ENCODE measurements at regions of chr10 and their contacts with region 1.

Region 1: DNA sequence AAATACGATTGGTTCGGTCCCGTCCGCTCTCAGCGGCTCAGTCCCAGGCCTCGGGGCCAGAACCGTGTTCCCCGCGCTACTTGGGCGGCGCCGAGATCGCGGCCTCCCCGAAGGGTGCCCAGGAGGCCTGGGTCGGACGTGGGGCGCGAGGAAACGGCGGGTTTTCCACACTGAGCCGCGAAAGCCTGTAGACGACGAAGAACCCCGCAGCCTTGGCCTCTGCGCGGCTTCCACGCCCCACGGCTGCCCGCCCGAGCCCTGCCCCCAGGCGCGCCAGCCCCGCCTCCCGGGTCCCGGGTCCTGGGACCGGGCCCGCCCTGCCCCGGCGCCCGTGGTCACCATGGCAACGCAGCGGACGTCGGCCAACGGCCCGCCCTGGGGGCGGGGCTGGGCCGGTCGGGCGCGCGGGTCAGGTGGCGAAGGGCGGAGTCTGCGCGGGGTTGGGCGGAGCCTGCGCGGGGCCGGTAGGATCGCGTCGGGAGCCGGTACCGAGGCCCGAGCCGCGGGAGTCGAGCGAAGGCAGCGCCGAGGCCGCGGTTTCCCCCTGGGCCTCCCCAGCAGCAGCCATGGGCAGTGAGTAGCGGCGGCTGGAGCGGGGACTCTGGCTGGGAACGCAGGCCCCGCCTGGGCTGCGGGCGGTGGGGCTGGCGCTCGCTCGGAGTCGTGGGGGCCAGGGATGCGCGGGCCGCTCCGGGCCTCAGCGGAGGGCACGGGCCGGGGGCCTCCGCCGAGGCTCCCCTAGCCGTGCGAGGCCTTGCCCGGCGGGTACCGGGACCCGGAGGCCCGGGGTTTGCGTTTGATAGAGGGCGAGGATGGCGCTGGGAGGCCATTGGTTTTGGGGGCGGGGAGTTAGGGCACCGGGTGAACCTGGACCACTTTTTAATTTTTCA is at the start of gene SEC61A2:
- DNase-seq: peak; percentile 99
- total RNA-seq, gene SEC61A2: 14.5 TPM

Region 2: GRCh38 chr10:12068449-12069269 is 60.8 kb before region 1 on chr10 and contains the start of gene DHTKD1:
- intact Hi-C with region 1: loop called (anchors 2 kb)
- DNase-seq: peak; percentile 99
- total RNA-seq, gene DHTKD1: 25.0 TPM

Region 3: DNA sequence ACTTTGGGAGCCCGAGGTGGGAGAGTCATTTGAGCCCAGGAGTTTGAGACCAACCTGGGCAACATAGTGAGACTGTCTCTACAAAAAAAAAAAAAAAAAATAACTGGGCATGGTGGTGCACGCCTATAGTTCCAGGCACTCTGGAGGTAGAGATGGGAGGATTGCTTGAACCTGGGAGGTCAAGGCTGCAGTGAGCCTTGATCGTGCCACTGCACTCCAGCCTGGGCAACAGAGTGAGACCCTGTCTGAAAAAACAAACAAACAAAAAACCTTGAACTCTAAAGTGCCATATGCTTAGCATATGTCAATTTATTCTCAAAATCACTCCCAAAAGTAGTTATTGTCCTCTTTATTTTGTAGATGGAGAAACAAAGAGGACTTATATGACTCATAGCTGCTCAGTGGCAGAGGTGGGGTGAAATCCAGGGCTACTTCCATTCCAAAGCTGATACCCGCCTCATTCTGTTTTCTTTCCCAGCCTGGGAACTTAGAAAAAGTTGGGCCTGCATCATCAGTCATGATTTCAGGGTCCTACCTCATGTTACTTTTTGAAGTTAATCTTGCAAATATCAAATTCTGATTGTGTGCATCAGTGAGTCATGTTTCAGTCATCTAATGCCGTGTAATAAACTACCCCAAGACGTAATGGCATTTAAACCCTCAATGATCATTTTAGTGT is 47.4 kb before region 1 on chr10:
- intact Hi-C with region 1: no loop called
- DNase-seq: no peak